ENCODE measurements at regions of chr20 and their contacts with region 1.

Region 1: DNA sequence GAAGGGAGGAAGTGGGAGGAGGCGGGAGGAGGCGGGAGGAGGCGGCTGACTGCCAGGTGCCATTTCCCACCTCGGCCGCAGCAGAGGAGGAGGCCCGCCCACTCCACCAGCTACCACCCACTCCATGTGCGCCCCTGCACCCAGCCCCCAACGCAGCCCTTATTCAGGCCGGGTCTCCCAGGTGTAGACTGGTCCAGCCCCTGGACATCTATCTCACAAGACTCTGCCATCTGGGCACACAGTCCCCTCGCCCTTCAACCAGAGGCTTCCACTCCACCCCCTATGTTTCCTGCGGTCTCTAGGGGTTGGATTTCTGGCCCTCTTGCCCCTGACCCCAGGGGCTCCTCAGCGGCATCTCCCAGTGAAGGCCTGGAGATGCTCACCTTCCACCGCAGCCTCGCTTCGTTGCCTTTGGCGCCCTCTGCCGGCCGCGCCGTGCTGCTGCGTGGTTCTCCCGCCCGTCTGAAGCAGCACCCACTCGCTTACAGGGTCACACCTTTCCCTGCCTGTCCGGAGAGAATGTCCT is 32.6 kb upstream of the FAM83D start:
- DNase-seq: peak; percentile 81 to 85 (median 84)
- ATAC-seq: peak; percentile 94
- H3K4me3 ChIP-seq: no peak overlapping the region
- H3K27ac ChIP-seq: no peak overlapping the region
- H3K4me1 ChIP-seq: peaks cover 23 to 34% of the 10 kb centered on the region in 2 experiments
- H3K27me3 ChIP-seq: no peaks in the 10 kb centered on the region
- CTCF ChIP-seq: peak; percentile 85 to 91 (median 91)
- EP300 ChIP-seq: no peak
- POLR2A ChIP-seq: no peak
- RAD21 ChIP-seq: peak; percentile 79 to 91

Region 2: DNA sequence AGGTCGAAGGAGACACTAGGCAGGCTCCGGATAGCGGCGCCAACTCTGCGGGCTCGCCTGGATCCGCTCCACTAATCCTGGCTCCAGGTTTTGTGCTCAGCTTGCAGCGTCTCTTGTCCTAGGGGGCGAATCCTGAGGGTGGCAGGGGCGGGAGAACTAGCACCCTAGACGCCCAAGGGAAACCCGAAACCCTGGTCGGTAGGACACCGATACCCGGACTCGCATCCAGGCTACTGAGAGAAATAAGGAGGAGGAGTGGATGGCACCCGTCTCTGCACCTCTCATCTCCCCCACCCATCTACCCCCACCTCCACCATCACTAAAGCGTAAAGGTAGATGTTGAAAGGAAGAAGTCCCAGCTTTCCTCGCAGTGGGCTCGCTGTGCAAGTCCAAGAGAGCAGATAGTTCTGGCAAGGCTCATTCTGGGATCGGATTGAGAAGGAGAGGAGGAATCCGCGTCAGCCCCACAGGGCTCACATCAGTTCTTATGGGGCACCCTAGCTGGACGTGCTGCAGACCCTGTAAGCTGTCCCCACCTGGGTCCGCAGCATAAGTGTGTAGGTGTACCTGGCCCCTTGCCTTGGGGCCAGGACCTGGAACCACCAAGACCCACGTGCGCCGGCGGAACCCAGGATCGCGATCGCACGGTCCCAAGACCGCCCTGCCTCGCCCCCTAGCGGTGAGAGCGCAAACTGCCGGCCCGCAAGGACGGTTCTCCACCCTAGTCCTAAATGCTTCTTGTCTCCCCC is 162.5 kb before region 1 on chr20:
- CTCF ChIA-PET with region 1: no interaction called
- POLR2A ChIA-PET with region 1: no interaction called
- in situ Hi-C with region 1: no loop called
- intact Hi-C with region 1: loop called (anchors 5 kb)
- DNase-seq: peak; percentile 83 to 92 (median 89)
- ATAC-seq: peak; percentile 93
- H3K4me3 ChIP-seq: peak overlapping the region; percentile 37
- H3K27ac ChIP-seq: no peak overlapping the region
- H3K4me1 ChIP-seq: peaks cover 8 to 32% of the 10 kb centered on the region in 2 experiments; a peak in 4 of 5 replicates
- H3K27me3 ChIP-seq: peaks cover 22 to 60% of the 10 kb centered on the region in 2 experiments
- CTCF ChIP-seq: peak; percentile 86 to 97 (median 87)
- EP300 ChIP-seq: no peak
- POLR2A ChIP-seq: no peak
- RAD21 ChIP-seq: peak; percentile 69 to 86

Region 3: DNA sequence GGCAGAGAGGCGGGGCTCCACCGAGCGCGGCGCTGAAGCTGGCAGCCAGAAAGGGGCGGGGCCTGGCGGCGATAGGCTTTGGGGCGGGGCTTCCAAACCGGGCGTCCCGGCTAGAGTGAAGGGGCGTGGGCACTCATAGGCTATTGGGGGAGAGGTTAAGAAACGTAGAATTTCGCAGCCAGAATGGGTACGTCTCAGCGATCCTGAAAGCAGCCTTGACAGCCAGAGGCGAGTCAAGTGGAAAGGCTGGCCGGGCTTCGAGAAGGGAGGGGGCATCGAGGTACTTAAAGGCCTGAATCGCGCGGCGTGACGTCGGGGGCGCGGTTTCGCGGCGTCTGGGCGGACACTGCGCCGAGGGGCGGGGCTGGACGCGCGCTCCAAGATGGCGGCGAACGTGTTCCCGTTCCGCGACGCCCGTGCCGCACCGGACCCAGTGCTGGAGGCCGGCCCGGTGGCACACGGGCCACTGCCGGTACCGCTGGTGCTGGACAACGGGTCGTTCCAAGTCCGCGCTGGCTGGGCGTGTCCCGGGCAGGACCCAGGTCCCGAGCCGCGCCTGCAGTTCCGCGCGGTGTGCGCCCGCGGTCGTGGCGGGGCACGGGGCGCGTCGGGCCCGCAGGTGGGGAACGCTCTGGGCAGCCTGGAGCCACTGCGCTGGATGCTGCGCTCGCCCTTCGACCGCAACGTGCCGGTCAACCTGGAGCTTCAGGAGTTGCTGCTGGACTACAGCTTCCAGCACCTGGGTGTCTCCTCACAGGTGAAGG is 145.3 kb before region 1 on chr20 and contains the start of gene ACTR5:
- CTCF ChIA-PET with region 1: interaction called, 3 read pairs
- POLR2A ChIA-PET with region 1: interaction called, 4 read pairs
- in situ Hi-C with region 1: no loop called
- intact Hi-C with region 1: loop called (anchors 5 kb)
- DNase-seq: peak; percentile 91 to 97 (median 96)
- ATAC-seq: peak; percentile 95
- H3K4me3 ChIP-seq: peak within 1 kb of the TSS; percentile 89
- H3K27ac ChIP-seq: peak within 1 kb of the TSS; percentile 77
- H3K4me1 ChIP-seq: peaks cover 12 to 18% of the 10 kb centered on the region in 2 experiments; a peak in 4 of 5 replicates
- H3K27me3 ChIP-seq: no peaks in the 10 kb centered on the region
- CTCF ChIP-seq: no peak
- EP300 ChIP-seq: no peak
- POLR2A ChIP-seq: peak; percentile 82
- RAD21 ChIP-seq: no peak
- polyA plus RNA-seq, gene ACTR5: 0.93 to 1.8 TPM

Region 4: DNA sequence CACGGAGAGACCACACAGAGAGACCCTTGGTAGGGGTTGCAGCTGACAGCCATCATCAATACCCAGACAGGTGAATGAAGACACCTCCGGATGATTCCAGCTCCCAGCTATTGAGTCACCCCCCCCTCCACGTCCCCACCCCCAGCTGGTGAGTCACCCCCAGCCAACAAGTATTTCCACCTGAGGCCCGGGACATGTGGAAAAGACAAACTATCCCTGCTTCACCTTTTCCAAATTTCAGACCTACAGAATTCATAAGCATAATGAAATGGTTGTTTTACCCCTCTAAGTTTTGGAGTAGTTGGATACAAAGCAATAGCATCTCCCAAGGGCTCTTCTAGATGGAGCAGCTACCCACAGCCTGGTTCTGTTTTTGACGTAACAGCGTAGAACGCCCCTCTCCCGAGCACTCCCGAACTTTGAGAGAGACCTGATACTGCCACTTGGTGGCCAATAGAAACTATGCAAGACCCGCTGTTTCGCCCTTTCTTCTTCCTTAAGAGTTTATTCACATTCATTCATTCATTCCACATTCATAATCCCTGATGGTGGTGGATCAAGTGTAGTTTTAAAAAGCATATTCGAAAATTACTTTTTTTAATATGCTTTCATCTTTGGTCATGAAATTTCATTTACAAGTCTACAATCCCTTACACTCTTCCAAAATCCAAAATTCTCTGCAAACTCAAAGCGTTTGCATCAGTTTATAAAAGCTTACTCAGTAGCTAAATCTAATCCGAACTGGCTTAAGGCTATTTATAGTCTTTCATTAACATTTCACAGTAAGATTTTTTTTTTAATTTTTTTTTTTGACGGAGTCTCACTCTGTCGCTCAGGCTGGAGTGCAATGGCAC is 103.2 kb before region 1 on chr20:
- CTCF ChIA-PET with region 1: interaction called, 3 read pairs
- POLR2A ChIA-PET with region 1: no interaction called
- in situ Hi-C with region 1: no loop called
- intact Hi-C with region 1: loop called (anchors 5 kb)
- DNase-seq: peak; percentile 61 to 79 (median 74)
- ATAC-seq: peak; percentile 94
- H3K4me3 ChIP-seq: no peak overlapping the region
- H3K27ac ChIP-seq: no peak overlapping the region
- H3K4me1 ChIP-seq: no peaks in the 10 kb centered on the region
- H3K27me3 ChIP-seq: no peaks in the 10 kb centered on the region
- CTCF ChIP-seq: peak; percentile 71 to 86 (median 82)
- EP300 ChIP-seq: no peak
- POLR2A ChIP-seq: no peak
- RAD21 ChIP-seq: peak; percentile 47 to 75

Region 5: GRCh38 chr20:38805502-38805957 is 88.1 kb before region 1 on chr20 and contains the start of gene PPP1R16B:
- CTCF ChIA-PET with region 1: interaction called, 3 read pairs
- POLR2A ChIA-PET with region 1: no interaction called
- in situ Hi-C with region 1: no loop called
- intact Hi-C with region 1: loop called (anchors 5 kb)
- DNase-seq: peak; percentile 66 to 86 (median 80)
- ATAC-seq: peak; percentile 97
- H3K4me3 ChIP-seq: peak within 1 kb of the TSS; percentile 55
- H3K27ac ChIP-seq: peak within 1 kb of the TSS; percentile 78
- H3K4me1 ChIP-seq: peaks cover 10 to 27% of the 10 kb centered on the region in 2 experiments
- H3K27me3 ChIP-seq: peaks cover 0 to 10% of the 10 kb centered on the region in 2 experiments; a peak in 2 of 5 replicates
- CTCF ChIP-seq: no peak
- EP300 ChIP-seq: no peak
- POLR2A ChIP-seq: peak; percentile 62; the same call in 1 of the 2 replicates
- RAD21 ChIP-seq: no peak
- polyA plus RNA-seq, gene PPP1R16B: 1.5 to 2.3 TPM

Region 6: GRCh38 chr20:38863024-38863851 is 30.4 kb before region 1 on chr20:
- CTCF ChIA-PET with region 1: no interaction called
- POLR2A ChIA-PET with region 1: interaction called, 4 read pairs
- in situ Hi-C with region 1: no loop called
- intact Hi-C with region 1: loop called (anchors 2 kb)
- DNase-seq: peak in 3 of 4 experiments; percentile 26 to 75 (median 48)
- ATAC-seq: peak; percentile 45
- H3K4me3 ChIP-seq: no peak overlapping the region
- H3K27ac ChIP-seq: peak overlapping the region; percentile 30; the same call in 2 of the 3 replicates
- H3K4me1 ChIP-seq: peaks cover 30 to 54% of the 10 kb centered on the region in 2 experiments
- H3K27me3 ChIP-seq: no peaks in the 10 kb centered on the region
- CTCF ChIP-seq: no peak
- EP300 ChIP-seq: no peak
- POLR2A ChIP-seq: no peak
- RAD21 ChIP-seq: no peak

Region 7: GRCh38 chr20:39025883-39026282 is 132.3 kb after region 1 on chr20:
- CTCF ChIA-PET with region 1: no interaction called
- POLR2A ChIA-PET with region 1: no interaction called
- in situ Hi-C with region 1: no loop called
- intact Hi-C with region 1: no loop called
- DNase-seq: no peak
- ATAC-seq: no peak
- H3K4me3 ChIP-seq: no peak overlapping the region
- H3K27ac ChIP-seq: no peak overlapping the region
- H3K4me1 ChIP-seq: no peaks in the 10 kb centered on the region
- H3K27me3 ChIP-seq: no peaks in the 10 kb centered on the region
- CTCF ChIP-seq: no peak
- EP300 ChIP-seq: no peak
- POLR2A ChIP-seq: no peak
- RAD21 ChIP-seq: no peak